H1 (cell line): ENCODE measurements at regions of chr3 and their contacts with region 1.

Region 1: DNA sequence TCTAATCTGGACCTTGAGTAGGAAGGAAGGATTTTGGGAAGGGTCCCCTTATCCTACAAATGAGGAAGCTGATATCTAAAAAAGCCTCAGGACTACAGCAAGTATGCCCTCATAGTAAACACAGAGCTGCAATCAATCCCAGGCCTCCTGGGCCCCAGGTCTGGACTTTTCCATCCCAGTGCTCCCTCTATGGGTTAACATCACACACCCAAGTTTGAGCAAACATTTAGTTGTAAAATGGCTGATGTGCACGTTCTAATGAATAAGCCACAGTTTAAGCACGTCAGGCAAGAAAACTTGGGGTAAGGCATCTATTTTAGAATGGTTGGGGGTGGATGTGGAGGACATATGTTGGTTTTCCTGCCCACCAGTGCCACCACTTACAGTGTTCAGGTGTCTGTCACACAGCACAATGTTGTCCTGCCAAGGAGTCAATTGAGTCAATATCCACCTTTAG is 44.3 kb upstream of the UBE2E1 start:
- DNase-seq: no peak
- H3K4me3 ChIP-seq: no peak overlapping the region; a peak in 1 of 8 replicates
- H3K27ac ChIP-seq: peak overlapping the region; percentile 57; the same call in 1 of the 2 replicates
- H3K4me1 ChIP-seq: peaks cover 6 to 23% (median 18%) of the 10 kb centered on the region in 4 experiments; a peak in 6 of 7 replicates
- H3K27me3 ChIP-seq: no peaks in the 10 kb centered on the region; a peak in 1 of 7 replicates
- CTCF ChIP-seq: peak; percentile 19 to 62 (median 43)
- EP300 ChIP-seq: no peak
- POLR2A ChIP-seq: no peak
- RAD21 ChIP-seq: peak; percentile 53 to 66

Region 2: DNA sequence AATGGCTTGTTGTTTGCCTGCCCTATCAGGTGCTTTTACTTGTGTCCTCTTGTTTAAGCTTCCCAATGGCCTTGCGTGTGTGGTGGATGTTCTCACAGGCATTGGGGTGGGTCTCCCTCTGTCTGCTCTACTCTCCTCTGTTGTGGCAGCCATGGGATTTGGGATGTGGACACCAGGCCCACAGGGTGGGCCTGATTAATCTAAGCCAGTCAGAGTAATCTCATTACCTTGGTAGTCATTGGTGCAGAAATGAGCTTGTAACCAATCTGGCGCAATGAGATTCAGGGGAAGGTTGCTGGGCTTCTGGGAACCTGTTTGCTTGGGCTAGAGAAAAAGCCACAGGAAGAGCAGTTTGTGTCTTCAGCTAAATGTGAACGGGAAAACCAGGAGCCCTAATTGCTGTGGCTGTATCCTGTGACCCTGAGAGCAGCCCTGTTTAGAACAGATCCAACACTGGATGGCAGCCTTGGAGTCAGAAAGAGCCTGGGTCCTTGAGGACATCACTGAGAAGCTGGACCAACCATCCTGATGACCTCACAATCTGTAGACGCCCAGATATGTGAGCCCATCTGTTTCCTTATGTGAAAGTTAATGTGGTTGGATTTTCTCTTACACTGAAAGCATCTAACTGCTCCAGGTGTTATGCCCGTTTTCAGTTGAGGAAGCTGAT is 113.0 kb before region 1 on chr3:
- CTCF ChIA-PET with region 1: interaction called, 16 read pairs
- POLR2A ChIA-PET with region 1: no interaction called
- DNase-seq: no peak
- H3K4me3 ChIP-seq: no peak overlapping the region
- H3K27ac ChIP-seq: no peak overlapping the region
- H3K4me1 ChIP-seq: peaks cover 6 to 17% (median 12%) of the 10 kb centered on the region in 4 experiments; a peak in 5 of 7 replicates
- H3K27me3 ChIP-seq: no peaks in the 10 kb centered on the region
- CTCF ChIP-seq: peak in 2 of 3 experiments; percentile 22 to 26; a peak in 3 of 4 replicates
- EP300 ChIP-seq: no peak
- POLR2A ChIP-seq: no peak
- RAD21 ChIP-seq: peak; percentile 58 to 71

Region 3: GRCh38 chr3:23748398-23749110 is 12.9 kb before region 1 on chr3:
- CTCF ChIA-PET with region 1: interaction called, 21 read pairs
- POLR2A ChIA-PET with region 1: no interaction called
- DNase-seq: no peak
- H3K4me3 ChIP-seq: no peak overlapping the region
- H3K27ac ChIP-seq: no peak overlapping the region
- H3K4me1 ChIP-seq: peaks cover 14 to 25% (median 19%) of the 10 kb centered on the region in 4 experiments
- H3K27me3 ChIP-seq: peaks cover 3 to 20% (median 16%) of the 10 kb centered on the region in 4 experiments
- CTCF ChIP-seq: no peak
- EP300 ChIP-seq: no peak
- POLR2A ChIP-seq: no peak
- RAD21 ChIP-seq: no peak

Region 4: GRCh38 chr3:23775254-23775909 is 13.9 kb after region 1 on chr3:
- CTCF ChIA-PET with region 1: interaction called, 10 read pairs
- POLR2A ChIA-PET with region 1: interaction called, 3 read pairs
- DNase-seq: no peak
- H3K4me3 ChIP-seq: no peak overlapping the region
- H3K27ac ChIP-seq: no peak overlapping the region
- H3K4me1 ChIP-seq: no peaks in the 10 kb centered on the region
- H3K27me3 ChIP-seq: no peaks in the 10 kb centered on the region
- CTCF ChIP-seq: no peak
- EP300 ChIP-seq: no peak
- POLR2A ChIP-seq: no peak
- RAD21 ChIP-seq: no peak